Dendritic cell treated with granulocyte-macrophage colony-stimulating factor and Interleukin-4, amounts not matched to agents 40 ng/mL and 50 ng/mL, for 4 days (primary cell): ENCODE measurements at regions of chr17 and their contacts with region 1.

Region 1: DNA sequence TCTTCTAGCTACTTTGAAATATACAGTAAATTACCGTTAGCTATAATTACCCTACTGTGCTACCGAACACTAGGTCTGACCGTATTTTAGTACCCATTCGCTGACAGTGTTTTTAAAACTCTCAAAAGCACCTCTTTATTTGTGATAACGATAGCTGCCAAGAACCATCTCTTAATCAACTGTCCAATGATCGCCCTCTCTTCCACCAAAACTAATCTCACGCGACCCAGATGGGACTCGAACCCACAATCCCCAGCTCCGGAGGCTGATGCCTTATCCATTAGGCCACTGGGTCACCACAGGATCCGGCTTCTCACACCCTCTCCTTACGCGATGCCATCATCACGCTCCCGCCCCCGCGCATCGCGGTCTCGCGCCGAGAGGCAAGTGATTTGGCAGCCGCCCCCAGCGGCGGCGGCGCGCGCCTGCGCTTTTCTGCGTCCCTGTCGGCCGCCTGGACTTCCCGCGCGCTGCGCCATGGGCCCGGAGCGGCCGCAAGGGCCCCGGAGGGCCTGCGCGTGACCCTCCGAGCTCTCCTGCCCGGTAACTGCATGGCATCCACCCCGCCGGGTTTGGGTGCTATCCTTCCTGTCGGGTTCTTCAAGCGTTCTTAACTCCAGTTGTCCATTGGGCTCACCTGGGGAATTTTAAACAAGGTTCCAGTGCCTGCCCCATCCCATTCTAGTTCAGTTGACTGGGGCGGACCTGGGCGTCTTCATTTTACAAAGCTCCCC is 15.7 kb upstream of the KPNA2 start:
- H3K4me3 Mint-ChIP-seq: peak overlapping the region; percentile 91
- H3K27ac Mint-ChIP-seq: peak overlapping the region; percentile 91
- H3K4me1 Mint-ChIP-seq: peaks cover 17% of the 10 kb centered on the region
- H3K27me3 Mint-ChIP-seq: peaks cover 1% of the 10 kb centered on the region

Region 2: DNA sequence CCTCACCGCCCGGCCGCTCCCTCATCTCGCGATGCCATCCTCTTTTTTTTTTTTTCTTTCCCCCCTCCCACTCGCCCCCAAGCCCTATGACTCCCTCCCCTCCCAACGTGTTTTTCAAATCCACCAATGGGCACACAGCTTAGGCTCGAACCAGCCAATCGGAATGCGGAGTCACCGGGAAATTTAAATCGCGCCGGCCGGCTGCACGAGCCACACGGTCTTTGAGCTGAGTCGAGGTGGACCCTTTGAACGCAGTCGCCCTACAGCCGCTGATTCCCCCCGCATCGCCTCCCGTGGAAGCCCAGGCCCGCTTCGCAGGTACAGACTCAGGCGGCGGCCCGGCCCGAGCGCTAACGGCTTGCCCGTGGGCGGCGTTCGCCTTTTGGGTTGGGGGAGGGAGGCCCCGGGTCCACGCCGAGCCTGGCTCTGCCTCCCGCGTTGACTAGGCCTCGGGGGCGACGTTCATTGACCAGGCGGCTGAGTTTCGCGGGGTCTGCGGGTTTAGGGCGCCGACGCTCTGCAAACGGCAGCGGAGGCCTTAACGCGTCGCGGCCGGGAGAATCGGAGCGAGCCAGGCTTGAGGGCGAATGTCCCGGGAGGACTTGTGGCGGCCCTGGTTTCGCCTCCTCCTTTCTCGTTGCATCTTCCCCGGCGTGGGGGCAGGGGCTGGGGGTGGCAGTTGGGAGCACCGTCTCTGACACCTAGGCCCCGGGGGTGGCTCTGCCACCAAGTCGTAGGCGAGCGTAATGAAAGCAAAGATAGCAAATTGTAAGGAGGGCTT is 15.9 kb after region 1 on chr17 and contains the start of gene KPNA2:
- intact Hi-C with region 1: loop called (anchors 2 kb)
- H3K4me3 Mint-ChIP-seq: peak within 1 kb of the TSS; percentile 93
- H3K27ac Mint-ChIP-seq: peak within 1 kb of the TSS; percentile 87
- H3K4me1 Mint-ChIP-seq: peaks cover 16% of the 10 kb centered on the region
- H3K27me3 Mint-ChIP-seq: no peaks in the 10 kb centered on the region

Region 3: DNA sequence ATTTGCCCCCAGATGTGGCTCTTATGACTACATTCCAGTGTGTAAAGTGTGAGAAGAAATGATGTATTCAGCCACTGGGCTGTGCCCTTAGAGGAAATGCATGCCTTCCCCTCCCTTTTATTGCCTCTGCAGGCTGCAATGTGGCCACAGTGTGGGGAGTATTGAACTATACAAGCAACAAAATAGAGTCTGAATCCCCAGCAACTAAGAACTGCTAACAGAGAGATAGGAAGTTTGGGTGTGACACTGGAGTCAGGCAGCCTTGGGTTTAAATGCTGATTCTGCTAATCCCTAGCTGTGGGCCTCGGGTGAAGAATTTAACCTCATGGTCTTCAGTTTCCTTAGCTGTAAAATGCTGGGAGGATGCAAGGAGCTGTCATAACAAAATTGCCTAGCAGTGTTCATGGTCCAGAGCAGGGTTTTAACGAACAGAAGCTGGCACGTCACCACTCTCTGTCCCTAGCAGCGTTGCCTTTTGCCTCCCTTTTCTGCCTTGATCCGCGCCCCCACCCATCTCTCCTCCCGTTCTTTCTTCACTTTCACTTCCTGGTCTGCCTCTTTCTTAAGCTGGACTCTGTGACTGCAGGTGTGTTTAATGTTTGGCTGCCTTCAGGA is 66.0 kb after region 1 on chr17:
- intact Hi-C with region 1: no loop called
- H3K4me3 Mint-ChIP-seq: peak overlapping the region; percentile 49
- H3K27ac Mint-ChIP-seq: peak overlapping the region; percentile 79
- H3K4me1 Mint-ChIP-seq: peaks cover 49% of the 10 kb centered on the region
- H3K27me3 Mint-ChIP-seq: no peaks in the 10 kb centered on the region